Left colon (tissue), 2 donors: ENCODE measurements at regions of chr12 and their contacts with region 1.

Region 1: DNA sequence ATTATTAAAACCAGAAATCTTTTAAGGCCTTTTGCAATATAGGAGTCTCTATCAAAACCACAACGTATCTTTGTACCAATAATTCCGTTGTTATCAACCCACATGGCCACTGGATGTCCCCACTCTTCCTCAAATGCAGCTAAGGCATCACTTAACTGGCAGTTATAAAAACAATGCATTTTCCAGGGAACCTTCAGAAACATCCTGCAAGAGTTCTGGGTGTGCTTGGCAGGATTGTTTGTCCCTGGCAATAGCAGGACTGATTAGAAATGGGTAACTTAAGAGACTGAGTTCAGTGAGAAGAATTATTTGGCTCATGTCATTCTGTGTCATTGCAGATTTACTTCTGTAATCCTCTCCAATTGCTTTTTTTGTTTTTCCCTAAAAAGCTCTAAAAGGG is 112.0 kb downstream of the SLC15A5 start:
- DNase-seq: peak in 1 of 2 donors; percentile 24
- ATAC-seq: peak; percentile 91

Region 2: DNA sequence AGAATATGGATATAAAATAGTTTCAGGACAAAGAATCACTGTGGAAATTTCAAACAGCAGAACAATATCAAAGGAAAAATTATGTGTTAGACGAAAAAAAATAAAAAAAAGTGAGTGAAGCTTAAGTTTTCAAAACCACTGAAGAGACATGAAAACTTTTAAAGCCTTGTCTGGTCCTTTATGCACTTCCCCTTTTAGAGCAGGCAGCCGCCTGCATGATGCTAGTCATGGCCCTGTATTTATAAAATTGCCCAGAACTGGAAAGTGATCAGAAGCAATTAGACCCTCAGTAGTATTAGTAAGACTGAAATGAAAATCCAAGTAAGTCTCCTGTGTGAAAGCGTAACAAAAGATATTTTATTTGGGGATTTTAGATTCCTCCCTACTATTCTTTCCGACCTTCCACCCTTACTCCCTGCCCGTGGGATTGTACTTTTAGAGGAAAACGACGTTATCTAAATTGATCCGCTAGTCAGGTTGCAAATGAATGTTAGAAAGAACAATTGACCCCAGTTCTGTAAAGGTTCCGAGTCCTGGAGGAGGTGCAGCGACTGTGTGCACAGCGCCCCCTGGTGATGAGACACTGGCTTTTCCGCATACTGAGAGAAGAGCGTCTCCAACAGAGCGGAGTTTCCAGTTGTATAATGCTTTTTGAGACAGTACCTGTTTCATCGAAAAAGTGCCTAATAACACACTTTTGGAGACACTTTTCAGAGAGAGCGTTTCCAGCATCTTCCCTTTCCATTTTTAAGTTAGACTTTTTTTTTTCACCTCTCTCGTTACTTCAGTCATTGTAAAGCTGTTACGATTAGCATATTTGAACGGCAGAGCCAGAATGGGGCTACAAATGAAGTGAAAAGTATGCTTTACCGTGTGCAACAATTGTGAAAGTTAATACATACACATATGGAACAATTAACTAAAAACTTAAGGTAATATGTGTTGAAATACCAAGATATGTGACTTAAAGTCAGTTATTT is 194.3 kb after region 1 on chr12:
- intact Hi-C with region 1: loop called in 1 of 2 experiments (anchors 10 kb)
- DNase-seq: peak in 1 of 2 donors; percentile 80
- ATAC-seq: peak; percentile 77